ENCODE measurements at regions of chr5 and their contacts with region 1.

Region 1: GRCh38 chr5:176361437-176362232 is at the start of gene KIAA1191:
- DNase-seq: peak; percentile 90 to 97 (median 95)
- H3K4me3 ChIP-seq: peak within 1 kb of the TSS; percentile 73 to 100 (median 95)
- H3K27ac ChIP-seq: peak within 1 kb of the TSS; percentile 15 to 93 (median 82)
- H3K27me3 ChIP-seq: no peaks in the 10 kb centered on the region
- CTCF ChIP-seq: peak in 52 of 56 donors; percentile 14 to 66 (median 43)
- total RNA-seq, gene KIAA1191: 94.9 to 173 (median 136) TPM

Region 2: DNA sequence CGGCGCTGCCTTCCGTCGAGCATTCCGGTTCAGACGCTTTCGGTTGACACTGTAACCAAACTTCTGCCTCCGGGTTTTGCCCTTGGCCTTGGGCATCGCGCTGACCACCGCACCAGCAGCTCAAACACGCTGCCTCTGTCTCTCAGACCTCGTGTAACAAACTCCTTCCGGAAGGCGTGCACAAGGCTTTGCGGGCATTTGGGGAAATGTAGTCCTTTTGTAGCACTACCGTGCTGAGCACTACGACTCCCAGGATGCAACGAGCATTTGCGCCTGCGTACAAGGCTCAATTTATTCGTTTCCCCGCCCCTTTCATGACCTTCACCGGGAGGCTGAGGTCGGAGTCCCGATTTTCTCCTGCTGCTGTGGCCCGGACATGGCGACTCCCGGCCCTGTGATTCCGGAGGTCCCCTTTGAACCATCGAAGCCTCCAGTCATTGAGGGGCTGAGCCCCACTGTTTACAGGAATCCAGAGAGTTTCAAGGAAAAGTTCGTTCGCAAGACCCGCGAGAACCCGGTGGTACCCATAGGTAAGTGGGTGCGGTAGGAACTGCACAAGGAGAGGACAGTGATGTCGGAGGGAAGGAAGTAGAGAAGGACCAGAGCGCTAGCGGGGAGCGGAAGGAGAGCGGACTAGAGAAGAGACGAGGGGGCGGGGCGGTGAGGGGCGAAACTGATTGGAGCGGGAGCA is 27.0 kb after region 1 on chr5 and contains the starts of genes HIGD2A and NOP16:
- intact Hi-C with region 1: loop called (anchors 2 kb)
- DNase-seq: peak; percentile 93 to 99 (median 98)
- H3K4me3 ChIP-seq: peak within 1 kb of the TSS; percentile 61 to 99 (median 88)
- H3K27ac ChIP-seq: peak within 1 kb of the TSS; percentile 76 to 99 (median 96)
- H3K27me3 ChIP-seq: no peaks in the 10 kb centered on the region
- CTCF ChIP-seq: peak in 23 of 56 donors; percentile 2 to 43 (median 22)
- total RNA-seq, gene HIGD2A: 58.3 to 114 (median 80.1) TPM
- total RNA-seq, gene NOP16: 7.6 to 21.5 (median 13.1) TPM

Region 3: GRCh38 chr5:176400382-176401156 is 38.9 kb after region 1 on chr5:
- intact Hi-C with region 1: no loop called
- DNase-seq: no peak
- H3K4me3 ChIP-seq: no peak overlapping the region
- H3K27ac ChIP-seq: peak overlapping the region in 11 of 59 donors; percentile 1 to 64 (median 31)
- H3K27me3 ChIP-seq: no peaks in the 10 kb centered on the region
- CTCF ChIP-seq: no peak

Measured in dorsolateral prefrontal cortex (tissue), 120 donors.